ENCODE measurements at regions of chrX and their contacts with region 1.

Region 1: GRCh38 chrX:48508400-48509244 is at the start of gene PORCN:
- DNase-seq: peak; percentile 35
- ATAC-seq: peak; percentile 94
- H3K4me3 ChIP-seq: peak within 1 kb of the TSS; percentile 58 to 77 (median 73)
- H3K27ac ChIP-seq: peak within 1 kb of the TSS; percentile 38
- H3K4me1 ChIP-seq: peaks cover 10% of the 10 kb centered on the region
- H3K27me3 ChIP-seq: no peaks in the 10 kb centered on the region
- CTCF ChIP-seq: no peak
- EP300 ChIP-seq: no peak
- POLR2A ChIP-seq: peak in 1 of 2 experiments; percentile 77; a peak in 2 of 4 replicates
- RAD21 ChIP-seq: no peak
- total RNA-seq, gene PORCN: 2.6 and 3.9 TPM in 2 replicates

Region 2: DNA sequence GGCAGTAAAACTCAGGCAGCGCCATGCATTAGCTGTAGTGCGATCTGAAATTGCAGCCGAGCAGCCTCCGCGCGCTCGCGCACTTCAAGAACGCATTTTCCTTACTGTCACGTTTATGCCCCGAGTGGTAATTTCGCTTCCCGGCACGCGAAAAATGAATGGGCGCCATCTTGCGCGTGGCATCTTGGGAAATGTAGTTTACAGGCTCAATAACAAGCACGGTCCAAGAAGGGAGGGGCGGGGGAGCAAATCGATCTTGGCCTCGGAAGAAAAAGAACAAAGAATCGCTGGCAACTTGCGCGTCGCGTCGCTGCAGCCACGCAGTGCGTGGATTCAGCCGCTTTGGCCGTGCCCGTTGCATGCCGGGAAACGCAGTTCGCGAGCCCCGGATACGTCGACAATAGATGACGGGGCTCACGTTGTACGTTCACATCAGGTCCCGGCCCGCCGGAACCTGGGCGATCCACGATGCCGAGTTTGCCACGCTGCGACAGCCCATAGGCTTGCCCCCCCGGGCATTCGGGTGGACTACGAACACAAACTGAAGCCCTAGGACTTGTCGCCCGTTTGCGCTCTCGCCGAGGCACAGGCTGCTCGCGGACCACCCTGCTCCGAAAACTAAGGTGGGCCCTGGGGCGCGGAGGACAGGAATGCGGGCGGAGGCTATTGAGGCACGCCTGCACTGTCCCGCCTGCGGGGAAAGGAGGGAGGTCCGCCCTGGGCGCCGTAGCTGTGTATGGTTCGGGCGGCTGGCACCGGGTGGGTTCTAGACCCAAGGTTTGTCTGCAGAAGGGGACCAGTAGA is 32.6 kb before region 1 on chrX and contains the start of gene FTSJ1:
- CTCF ChIA-PET with region 1: no interaction called
- POLR2A ChIA-PET with region 1: no interaction called
- in situ Hi-C with region 1: no loop called
- intact Hi-C with region 1: loop called (anchors 5 kb)
- DNase-seq: peak; percentile 76
- ATAC-seq: peak; percentile 85
- H3K4me3 ChIP-seq: peak within 1 kb of the TSS; percentile 68 to 78 (median 77)
- H3K27ac ChIP-seq: peak within 1 kb of the TSS; percentile 76
- H3K4me1 ChIP-seq: peaks cover 46% of the 10 kb centered on the region
- H3K27me3 ChIP-seq: no peaks in the 10 kb centered on the region; a peak in 1 of 5 replicates
- CTCF ChIP-seq: 0 out of 2 replicates have a peak, but pooled peaks have one; percentile 8
- EP300 ChIP-seq: no peak
- POLR2A ChIP-seq: peak in 1 of 2 experiments; percentile 50; a peak in 2 of 4 replicates
- RAD21 ChIP-seq: no peak
- total RNA-seq, gene FTSJ1: 37.9 and 40.1 TPM in 2 replicates

Measured in HepG2 (cell line).